HEK293 (cell line): ENCODE measurements at regions of chr22 and their contacts with region 1.

Region 1: DNA sequence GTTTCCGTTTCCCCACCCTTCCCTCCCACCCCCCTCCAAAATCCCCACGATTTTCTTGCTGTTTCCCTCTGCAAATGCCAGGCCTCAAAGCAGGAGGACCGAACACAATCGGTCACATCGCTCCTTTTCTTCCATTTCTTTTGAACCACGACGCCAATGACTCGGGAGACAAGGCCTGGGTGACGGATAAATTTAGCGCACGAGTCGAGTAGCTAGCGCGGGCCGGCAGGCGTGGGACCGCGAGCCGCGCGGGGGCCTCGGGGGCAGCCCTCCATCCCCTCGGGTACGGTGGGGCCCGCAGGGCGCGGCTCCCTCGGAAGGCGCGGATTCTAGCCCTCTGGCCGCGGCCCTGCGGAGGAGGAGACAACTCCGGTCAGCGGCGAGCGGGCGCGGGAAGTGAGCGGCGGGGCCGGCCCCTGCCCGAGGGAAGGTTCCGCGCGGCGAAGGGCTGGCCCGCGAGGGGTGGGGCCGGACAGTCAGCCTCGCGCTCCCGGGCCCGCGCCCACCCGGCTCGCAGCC is 414 bp downstream of the JOSD1 start:
- H3K4me3 ChIP-seq: peak overlapping the region; percentile 76
- H3K27ac ChIP-seq: peak overlapping the region; percentile 93
- H3K4me1 ChIP-seq: peaks cover 7% of the 10 kb centered on the region; the same call in 1 of the 2 replicates
- CTCF ChIP-seq: no peak

Region 2: DNA sequence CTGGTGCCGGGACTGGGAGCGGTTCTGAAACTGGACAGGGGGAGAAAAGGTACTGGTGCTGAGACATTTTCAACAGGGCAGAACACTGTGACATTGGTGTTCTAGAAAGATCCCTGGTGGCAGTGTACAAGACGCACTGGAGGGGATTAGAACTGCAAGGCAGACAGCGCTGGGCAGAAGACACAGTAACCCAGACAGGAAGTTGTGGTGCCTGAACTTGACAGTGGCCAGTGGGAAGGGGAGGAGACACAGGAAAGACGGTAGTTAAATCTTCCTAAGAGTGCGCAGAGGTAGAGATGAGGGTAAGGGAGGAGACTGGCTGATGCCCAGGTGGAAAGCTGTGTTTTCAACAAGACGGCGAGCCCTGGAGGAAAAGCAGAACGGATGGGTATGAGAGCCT is 68.6 kb before region 1 on chr22:
- CTCF ChIA-PET with region 1: no interaction called
- POLR2A ChIA-PET with region 1: no interaction called
- H3K4me3 ChIP-seq: no peak overlapping the region
- H3K27ac ChIP-seq: no peak overlapping the region
- H3K4me1 ChIP-seq: no peaks in the 10 kb centered on the region
- CTCF ChIP-seq: no peak

Region 3: DNA sequence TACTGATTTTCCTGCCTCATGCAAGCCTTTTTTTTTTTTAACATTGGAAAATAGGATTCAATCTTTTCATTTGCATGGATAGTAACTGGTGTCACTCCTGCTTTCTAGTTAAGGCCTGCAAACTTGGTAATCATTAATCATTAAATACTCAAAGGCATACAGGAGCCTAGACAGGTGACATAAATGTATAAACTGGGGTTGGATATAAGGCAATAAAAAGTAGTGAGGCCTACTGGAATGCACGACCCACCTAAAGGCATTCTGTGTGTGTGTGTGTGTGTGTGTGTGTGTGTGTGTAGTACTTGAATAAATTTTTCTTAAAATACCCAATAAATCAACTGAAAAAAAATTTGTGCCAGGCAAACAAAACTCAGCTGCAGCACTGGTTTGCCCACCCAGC is 10.7 kb before region 1 on chr22:
- CTCF ChIA-PET with region 1: no interaction called
- POLR2A ChIA-PET with region 1: interaction called, 10 read pairs
- H3K4me3 ChIP-seq: no peak overlapping the region
- H3K27ac ChIP-seq: no peak overlapping the region
- H3K4me1 ChIP-seq: no peaks in the 10 kb centered on the region
- CTCF ChIP-seq: no peak